Endothelial cell of umbilical vein (primary cell): ENCODE measurements at regions of chr1 and their contacts with region 1.

Region 1: DNA sequence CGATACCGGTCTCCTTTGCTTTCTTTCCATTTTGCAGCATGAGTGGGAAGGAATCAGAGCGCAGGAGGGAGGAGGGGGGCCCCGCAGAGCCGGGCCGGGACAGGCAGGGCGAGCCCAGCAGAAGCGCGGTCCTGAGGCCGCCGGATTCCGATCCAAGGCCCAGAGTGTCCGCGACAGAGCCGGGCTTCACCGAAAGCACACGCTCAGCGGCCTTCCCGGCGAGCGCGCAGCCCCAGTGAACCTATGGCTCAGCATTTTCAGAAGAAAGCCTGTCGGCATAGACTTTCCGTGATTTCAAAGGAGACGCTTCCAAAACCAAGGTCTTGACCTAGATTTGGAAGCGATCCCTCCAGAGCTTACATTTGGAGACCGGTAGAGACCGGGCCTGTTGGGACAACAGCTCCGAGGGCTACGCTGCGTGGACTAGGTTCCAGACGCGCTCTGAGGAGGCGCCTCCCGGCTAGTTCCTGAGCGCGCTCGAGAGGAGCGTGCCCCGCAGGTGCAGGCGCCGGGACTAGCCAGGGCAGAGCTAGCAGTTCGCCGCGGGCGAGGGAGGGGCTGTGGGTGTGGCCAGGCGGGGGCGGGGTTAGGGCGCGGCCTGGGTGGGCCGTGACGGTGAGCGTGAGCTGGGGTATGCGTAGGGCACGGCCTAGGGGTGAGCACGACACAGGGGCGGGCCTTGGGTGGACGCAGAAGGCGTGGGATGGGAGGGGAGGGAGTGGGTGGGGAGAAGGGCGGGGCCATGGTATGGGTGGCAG is 27.8 kb upstream of the PRSS38 start:
- DNase-seq: peak; percentile 92
- H3K4me3 ChIP-seq: peak overlapping the region; percentile 50 to 62 (median 60)
- H3K27ac ChIP-seq: no peak overlapping the region
- H3K4me1 ChIP-seq: peaks cover 9% of the 10 kb centered on the region
- H3K27me3 ChIP-seq: peaks cover 0 to 1% of the 10 kb centered on the region in 2 experiments
- CTCF ChIP-seq: no peak
- POLR2A ChIP-seq: no peak

Region 2: GRCh38 chr1:227508431-227508830 is 279.3 kb before region 1 on chr1:
- CTCF ChIA-PET with region 1: no interaction called
- POLR2A ChIA-PET with region 1: no interaction called
- dilution Hi-C with region 1: no loop called
- intact Hi-C with region 1: no loop called
- DNase-seq: no peak
- H3K4me3 ChIP-seq: no peak overlapping the region
- H3K27ac ChIP-seq: no peak overlapping the region
- H3K4me1 ChIP-seq: no peaks in the 10 kb centered on the region
- H3K27me3 ChIP-seq: no peaks in the 10 kb centered on the region
- CTCF ChIP-seq: no peak
- POLR2A ChIP-seq: no peak

Region 3: DNA sequence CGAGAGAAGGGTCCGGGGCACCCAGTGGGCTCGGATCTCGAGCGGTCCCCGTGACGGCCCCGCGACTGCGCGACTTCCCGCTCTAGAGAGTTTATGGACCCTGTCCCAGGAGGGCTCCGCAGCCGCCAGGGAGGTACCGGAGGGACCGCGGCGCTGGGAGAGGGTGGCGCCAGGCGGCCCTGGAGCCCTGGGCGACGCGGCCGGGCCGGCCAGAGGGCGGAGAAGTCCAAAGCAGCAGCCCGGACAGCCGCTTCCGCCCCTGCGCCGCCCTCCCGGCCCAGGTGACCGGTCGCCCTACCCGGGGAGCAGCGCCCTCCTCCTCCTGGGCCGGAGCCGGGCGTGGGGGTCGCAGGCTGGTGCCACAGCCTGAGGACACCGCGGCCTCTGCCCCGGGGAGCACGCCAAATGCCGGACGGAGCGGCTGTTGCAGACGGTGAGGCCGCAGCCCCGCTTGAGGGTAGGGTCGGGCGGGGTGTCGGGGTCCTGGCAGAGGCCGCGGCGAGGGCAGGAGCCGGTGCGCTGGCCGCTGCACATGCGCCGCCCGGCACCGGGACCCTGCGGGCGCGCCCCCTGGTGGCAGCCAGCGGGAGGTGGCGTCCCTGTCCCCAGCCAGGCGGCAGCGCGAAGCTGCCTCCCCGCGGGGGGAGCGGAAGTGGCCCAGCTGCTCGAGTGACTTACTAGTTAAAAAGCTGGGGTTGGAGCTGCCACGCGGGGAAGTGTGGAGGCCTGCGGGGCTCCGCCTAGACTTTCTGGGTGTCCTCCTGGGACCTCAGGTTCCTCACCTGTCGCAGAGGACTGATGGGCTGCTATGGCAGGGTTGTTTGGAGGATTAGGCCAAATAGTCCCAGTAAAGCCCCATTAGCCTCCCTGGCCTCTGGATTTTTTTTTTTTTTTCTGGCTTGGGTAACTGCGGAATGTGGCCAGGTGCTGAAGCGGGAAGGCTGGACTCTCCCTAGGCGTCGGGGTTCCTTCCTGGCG is 245.3 kb before region 1 on chr1:
- CTCF ChIA-PET with region 1: no interaction called
- POLR2A ChIA-PET with region 1: no interaction called
- dilution Hi-C with region 1: no loop called
- intact Hi-C with region 1: loop called (anchors 5 kb)
- DNase-seq: peak; percentile 70
- H3K4me3 ChIP-seq: peak overlapping the region; percentile 2 to 64 (median 23)
- H3K27ac ChIP-seq: no peak overlapping the region
- H3K4me1 ChIP-seq: peaks cover 8% of the 10 kb centered on the region
- H3K27me3 ChIP-seq: no peaks in the 10 kb centered on the region
- CTCF ChIP-seq: peak; percentile 87 to 96
- POLR2A ChIP-seq: no peak

Region 4: DNA sequence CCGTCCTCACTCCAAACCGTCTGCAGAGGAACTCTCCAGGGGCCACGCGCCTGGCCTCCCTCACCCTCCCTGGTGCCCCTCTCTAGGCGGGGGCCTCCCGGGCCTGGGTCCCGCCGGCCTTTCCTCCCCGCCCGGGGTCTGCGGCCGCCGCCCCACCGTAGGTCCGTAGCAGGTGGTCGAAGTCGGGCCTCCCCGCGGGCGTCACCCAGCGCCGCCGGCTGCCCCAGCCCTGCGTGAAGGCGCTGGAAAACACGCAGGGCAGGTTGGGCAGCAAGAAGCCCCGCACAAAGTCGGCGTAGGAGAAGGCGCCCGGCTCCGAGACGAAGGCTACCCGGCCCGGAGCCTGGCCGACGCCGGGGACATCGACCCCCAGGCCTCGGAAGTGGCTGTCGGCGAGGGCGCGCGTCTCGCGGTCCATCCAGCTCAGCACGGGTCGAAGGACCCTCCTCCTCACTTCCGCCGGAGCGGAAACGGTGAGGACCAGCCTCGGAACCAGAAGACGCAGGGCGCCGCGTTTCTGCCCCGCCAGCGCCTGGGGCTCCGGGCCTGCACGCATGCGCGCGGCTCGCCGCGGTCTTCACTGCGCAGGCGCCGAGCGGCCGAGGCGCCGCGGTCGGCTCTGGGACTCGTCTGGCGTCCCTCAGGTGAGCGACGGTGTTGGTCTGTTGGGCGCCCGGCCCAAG is 52.7 kb before region 1 on chr1 and contains the starts of genes JMJD4 and SNAP47:
- CTCF ChIA-PET with region 1: no interaction called
- POLR2A ChIA-PET with region 1: no interaction called
- dilution Hi-C with region 1: no loop called
- intact Hi-C with region 1: loop called (anchors 1 kb)
- DNase-seq: peak; percentile 89
- H3K4me3 ChIP-seq: peak within 1 kb of the TSS; percentile 65 to 89 (median 87)
- H3K27ac ChIP-seq: peak within 1 kb of the TSS; percentile 44
- H3K4me1 ChIP-seq: peaks cover 12% of the 10 kb centered on the region
- H3K27me3 ChIP-seq: no peaks in the 10 kb centered on the region
- CTCF ChIP-seq: no peak
- POLR2A ChIP-seq: peak; percentile 80
- total RNA-seq, gene JMJD4: 15.2 and 17.3 TPM in 2 replicates
- total RNA-seq, gene SNAP47: 24.0 and 25.3 TPM in 2 replicates

Region 5: DNA sequence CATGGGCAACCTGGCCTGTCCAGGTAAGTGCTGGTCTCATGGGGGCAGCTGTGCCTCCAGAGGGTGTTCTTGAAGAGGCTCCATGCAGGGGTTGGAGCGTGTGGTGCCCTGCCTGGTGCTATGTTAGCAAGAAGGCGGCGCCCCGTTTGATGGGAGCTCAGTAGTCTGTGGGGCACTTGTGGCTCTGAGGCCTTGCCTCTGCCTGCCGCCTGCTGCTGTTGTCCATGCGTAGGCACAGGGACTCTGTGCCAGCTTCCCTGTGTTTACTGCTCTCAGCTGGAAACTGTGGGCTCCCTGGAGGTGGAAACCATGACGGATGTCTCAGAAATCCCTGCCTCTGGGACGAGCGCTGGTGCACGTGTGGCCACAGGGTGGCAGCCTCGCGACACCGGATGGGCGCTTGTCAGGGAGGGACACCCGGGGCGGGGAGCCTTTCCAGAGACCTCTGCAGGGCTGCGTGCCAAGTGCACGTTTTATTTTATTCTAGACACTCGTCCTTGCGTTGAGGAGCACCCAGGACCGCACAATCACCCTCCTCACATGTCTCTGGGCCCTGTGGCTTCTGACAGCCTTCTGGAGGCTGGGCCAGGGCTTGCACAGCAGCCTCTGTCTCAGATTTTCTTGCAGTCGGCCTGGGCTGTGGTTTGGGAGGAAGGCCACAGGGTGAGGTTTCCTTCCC is 25.3 kb before region 1 on chr1:
- CTCF ChIA-PET with region 1: interaction called, 9 read pairs
- POLR2A ChIA-PET with region 1: no interaction called
- dilution Hi-C with region 1: no loop called
- intact Hi-C with region 1: loop called (anchors 1 kb)
- DNase-seq: peak; percentile 76
- H3K4me3 ChIP-seq: no peak overlapping the region
- H3K27ac ChIP-seq: no peak overlapping the region
- H3K4me1 ChIP-seq: peaks cover 8% of the 10 kb centered on the region
- H3K27me3 ChIP-seq: no peaks in the 10 kb centered on the region
- CTCF ChIP-seq: peak; percentile 77 to 89
- POLR2A ChIP-seq: no peak

Region 6: GRCh38 chr1:227886993-227887696 is 99.5 kb after region 1 on chr1:
- CTCF ChIA-PET with region 1: no interaction called
- POLR2A ChIA-PET with region 1: no interaction called
- dilution Hi-C with region 1: no loop called
- intact Hi-C with region 1: loop called (anchors 5 kb)
- DNase-seq: peak; percentile 41
- H3K4me3 ChIP-seq: peak overlapping the region in 1 of 3 experiments; percentile 31
- H3K27ac ChIP-seq: no peak overlapping the region
- H3K4me1 ChIP-seq: no peaks in the 10 kb centered on the region
- H3K27me3 ChIP-seq: no peaks in the 10 kb centered on the region
- CTCF ChIP-seq: no peak
- POLR2A ChIP-seq: no peak